ENCODE measurements at regions of chr9 and their contacts with region 1.

Region 1: GRCh38 chr9:21078717-21079116 is 975 bp upstream of the IFNB1 start:
- DNase-seq: peak; percentile 34
- ATAC-seq: no peak
- H3K4me3 Mint-ChIP-seq: no peak overlapping the region
- H3K27ac Mint-ChIP-seq: no peak overlapping the region
- H3K4me1 Mint-ChIP-seq: peaks cover 38% of the 10 kb centered on the region
- H3K27me3 Mint-ChIP-seq: peaks cover 9% of the 10 kb centered on the region

Region 2: GRCh38 chr9:21031091-21031807 is 47.5 kb before region 1 on chr9 and contains the start of gene HACD4:
- CTCF ChIA-PET with region 1: interaction called, 10 read pairs
- POLR2A ChIA-PET with region 1: interaction called, 7 read pairs
- DNase-seq: peak; percentile 80
- ATAC-seq: peak; percentile 93
- H3K4me3 Mint-ChIP-seq: peak within 1 kb of the TSS; percentile 70
- H3K27ac Mint-ChIP-seq: peak within 1 kb of the TSS; percentile 82
- H3K4me1 Mint-ChIP-seq: peaks cover 22% of the 10 kb centered on the region
- H3K27me3 Mint-ChIP-seq: no peaks in the 10 kb centered on the region
- total RNA-seq, gene HACD4: 13.3 to 13.9 TPM

Region 3: GRCh38 chr9:21060919-21061561 is 17.7 kb before region 1 on chr9:
- CTCF ChIA-PET with region 1: interaction called, 27 read pairs
- POLR2A ChIA-PET with region 1: no interaction called
- DNase-seq: peak; percentile 60
- ATAC-seq: peak; percentile 76
- H3K4me3 Mint-ChIP-seq: peak overlapping the region; percentile 12
- H3K27ac Mint-ChIP-seq: peak overlapping the region; percentile 79
- H3K4me1 Mint-ChIP-seq: peaks cover 23% of the 10 kb centered on the region
- H3K27me3 Mint-ChIP-seq: no peaks in the 10 kb centered on the region

Region 4: GRCh38 chr9:21096172-21096900 is 17.6 kb after region 1 on chr9:
- CTCF ChIA-PET with region 1: interaction called, 19 read pairs
- POLR2A ChIA-PET with region 1: interaction called, 4 read pairs
- DNase-seq: peak; percentile 53
- ATAC-seq: peak; percentile 90
- H3K4me3 Mint-ChIP-seq: peak overlapping the region; percentile 74
- H3K27ac Mint-ChIP-seq: peak overlapping the region; percentile 85
- H3K4me1 Mint-ChIP-seq: peaks cover 48% of the 10 kb centered on the region
- H3K27me3 Mint-ChIP-seq: no peaks in the 10 kb centered on the region

Region 5: GRCh38 chr9:21102305-21102704 is 23.6 kb after region 1 on chr9:
- CTCF ChIA-PET with region 1: interaction called, 26 read pairs
- POLR2A ChIA-PET with region 1: no interaction called
- DNase-seq: no peak
- ATAC-seq: no peak
- H3K4me3 Mint-ChIP-seq: no peak overlapping the region
- H3K27ac Mint-ChIP-seq: no peak overlapping the region
- H3K4me1 Mint-ChIP-seq: peaks cover 14% of the 10 kb centered on the region
- H3K27me3 Mint-ChIP-seq: peaks cover 3% of the 10 kb centered on the region

Region 6: DNA sequence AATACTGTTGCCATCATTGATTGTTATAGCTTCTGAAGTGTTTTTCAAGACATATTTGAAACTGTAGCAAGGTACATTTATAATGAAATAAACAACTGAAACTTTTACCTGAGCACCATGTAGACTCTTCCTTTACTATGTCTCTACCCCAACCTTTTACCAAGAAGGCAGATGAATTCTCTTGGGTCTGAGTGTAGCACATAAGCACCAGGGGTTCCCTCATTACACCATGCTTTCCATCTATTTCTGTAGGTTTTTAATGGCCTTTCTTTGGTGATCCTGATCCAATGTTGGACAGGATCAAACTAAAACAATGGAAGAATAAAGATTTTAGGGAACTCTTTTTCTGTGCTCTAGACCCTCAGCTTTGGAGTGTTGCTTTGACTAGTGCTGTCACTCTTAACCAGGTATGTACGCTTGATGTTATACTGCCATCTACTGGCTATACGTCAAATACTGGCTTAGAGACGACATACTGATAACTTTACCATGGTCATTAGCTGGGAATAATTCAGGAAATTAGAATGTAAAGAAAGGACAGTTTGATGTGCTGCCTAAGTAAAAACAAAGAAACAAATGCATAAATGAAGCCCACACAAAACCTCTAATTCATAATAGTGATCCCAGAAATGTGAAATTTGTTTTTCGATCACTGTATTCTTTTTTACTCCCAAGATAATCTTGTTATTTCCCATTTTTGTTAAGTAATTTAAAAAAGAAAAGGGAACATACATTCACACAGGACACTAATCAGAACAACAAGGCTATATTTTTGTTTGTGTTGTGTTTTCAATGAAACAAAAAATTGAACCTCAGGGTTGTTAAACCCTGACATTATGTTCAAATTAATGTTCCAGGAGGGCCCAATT is 32.2 kb after region 1 on chr9:
- CTCF ChIA-PET with region 1: interaction called, 50 read pairs
- POLR2A ChIA-PET with region 1: no interaction called
- DNase-seq: peak; percentile 42
- ATAC-seq: peak; percentile 87
- H3K4me3 Mint-ChIP-seq: no peak overlapping the region
- H3K27ac Mint-ChIP-seq: no peak overlapping the region
- H3K4me1 Mint-ChIP-seq: no peaks in the 10 kb centered on the region
- H3K27me3 Mint-ChIP-seq: peaks cover 19% of the 10 kb centered on the region

Region 7: GRCh38 chr9:21154018-21154608 is 75.4 kb after region 1 on chr9:
- CTCF ChIA-PET with region 1: interaction called, 12 read pairs
- POLR2A ChIA-PET with region 1: no interaction called
- DNase-seq: peak; percentile 56
- ATAC-seq: peak; percentile 93
- H3K4me3 Mint-ChIP-seq: no peak overlapping the region
- H3K27ac Mint-ChIP-seq: no peak overlapping the region
- H3K4me1 Mint-ChIP-seq: peaks cover 25% of the 10 kb centered on the region
- H3K27me3 Mint-ChIP-seq: peaks cover 4% of the 10 kb centered on the region